Naive thymus-derived CD4-positive, alpha-beta T cell (primary cell): ENCODE measurements at regions of chr12 and their contacts with region 1.

Region 1: DNA sequence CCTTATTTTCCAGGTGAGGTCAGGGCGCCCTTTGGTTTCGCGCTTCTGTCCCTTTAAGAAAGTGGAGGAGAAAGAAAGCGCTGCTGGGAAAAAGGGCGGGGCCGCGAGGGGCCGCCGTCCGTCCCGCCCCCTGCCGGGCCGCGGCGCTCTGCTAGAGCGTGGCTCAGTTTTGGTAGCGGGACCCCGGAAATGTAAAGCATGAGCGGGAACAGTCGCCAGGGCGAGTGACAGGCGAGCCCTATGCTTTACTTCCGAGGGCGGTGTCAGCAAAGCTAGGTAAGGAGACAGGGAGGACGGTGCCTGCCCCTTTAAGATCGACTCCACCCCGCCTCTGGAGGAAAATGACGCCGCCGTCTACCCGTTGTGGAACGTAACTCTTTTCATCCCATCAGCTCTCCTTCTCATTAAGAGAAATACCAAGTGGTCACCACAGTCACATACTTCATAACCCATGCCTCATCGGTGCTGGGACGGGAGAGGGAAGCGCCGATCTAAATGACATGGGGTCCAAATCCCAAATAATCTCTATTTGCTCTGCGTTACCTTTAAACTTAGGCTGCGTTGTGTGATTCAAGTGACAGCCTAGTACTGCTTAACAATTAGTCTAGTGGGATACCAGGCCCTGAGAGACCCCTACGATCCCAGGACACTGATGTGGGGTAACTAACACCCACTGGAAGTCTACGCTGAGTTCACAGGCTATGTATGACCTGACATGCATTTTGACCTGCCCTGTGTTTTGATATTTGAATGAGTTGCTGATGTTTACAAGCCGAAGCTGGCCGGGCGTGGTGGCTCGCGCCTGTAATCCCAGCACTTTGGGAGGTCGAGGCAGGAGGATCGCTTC is at the start of gene ETFBKMT:
- DNase-seq: peak; percentile 85 to 95 (median 93)
- ATAC-seq: peak; percentile 99
- H3K4me3 ChIP-seq: peak within 1 kb of the TSS; percentile 85
- H3K4me3 Mint-ChIP-seq: peak within 1 kb of the TSS; percentile 81 to 99 (median 96)
- H3K27ac ChIP-seq: peak within 1 kb of the TSS; percentile 90
- H3K27ac Mint-ChIP-seq: peak within 1 kb of the TSS; percentile 91 to 100 (median 97)
- H3K4me1 ChIP-seq: peaks cover 0 to 10% of the 10 kb centered on the region in 2 donors
- H3K4me1 Mint-ChIP-seq: peaks cover 3 to 36% (median 24%) of the 10 kb centered on the region in 7 donors
- H3K27me3 ChIP-seq: no peaks in the 10 kb centered on the region
- H3K27me3 Mint-ChIP-seq: no peaks in the 10 kb centered on the region
- total RNA-seq, gene ETFBKMT: 0.92 to 2.0 (median 1.9) TPM

Region 2: DNA sequence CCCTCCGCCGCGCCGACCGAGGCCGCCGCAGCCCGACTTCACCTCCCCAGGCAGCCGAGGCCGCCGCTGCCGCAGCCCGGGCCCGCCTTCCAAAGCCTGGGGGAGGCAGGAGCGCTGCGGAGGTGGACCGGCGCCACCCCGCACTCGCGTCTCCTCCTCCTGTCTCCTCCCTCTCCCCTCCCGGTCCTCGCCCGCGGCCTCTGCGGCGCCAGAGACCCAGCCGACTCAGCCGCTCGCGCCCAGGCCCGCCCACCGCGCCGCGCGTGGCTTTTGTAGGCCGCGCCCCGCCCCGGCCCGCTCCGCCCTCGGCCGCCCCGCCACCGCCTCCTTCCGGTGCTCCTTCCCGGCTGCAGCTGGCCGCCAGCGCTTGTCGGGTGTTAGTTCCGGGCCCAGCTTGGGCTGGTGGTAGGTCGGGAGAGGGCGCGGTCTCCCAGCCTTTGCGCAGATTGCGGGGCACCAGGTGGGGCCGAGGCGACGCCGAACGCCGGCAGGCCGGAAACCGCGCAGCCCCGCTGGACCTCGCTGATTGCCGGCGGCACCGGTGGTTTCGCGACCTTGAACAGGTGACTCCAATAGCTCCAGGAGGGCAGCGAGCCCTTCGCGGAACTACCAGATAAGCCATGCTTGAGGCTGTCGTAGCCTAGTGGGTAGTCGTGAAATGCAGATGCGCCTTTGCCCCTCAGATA is 904.5 kb before region 1 on chr12 and contains the start of gene CAPRIN2:
- CTCF ChIA-PET with region 1: no interaction called
- POLR2A ChIA-PET with region 1: no interaction called
- intact Hi-C with region 1: loop called (anchors 1 to 2 kb)
- DNase-seq: peak; percentile 89 to 97 (median 92)
- ATAC-seq: peak; percentile 96
- H3K4me3 ChIP-seq: peak within 1 kb of the TSS; percentile 67
- H3K4me3 Mint-ChIP-seq: peak within 1 kb of the TSS; percentile 93 to 99 (median 96)
- H3K27ac ChIP-seq: peak within 1 kb of the TSS; percentile 63
- H3K27ac Mint-ChIP-seq: peak within 1 kb of the TSS; percentile 80 to 93 (median 90)
- H3K4me1 ChIP-seq: peaks cover 13 to 29% of the 10 kb centered on the region in 2 donors
- H3K4me1 Mint-ChIP-seq: peaks cover 22 to 53% (median 46%) of the 10 kb centered on the region in 7 donors
- H3K27me3 ChIP-seq: no peaks in the 10 kb centered on the region
- H3K27me3 Mint-ChIP-seq: no peaks in the 10 kb centered on the region
- total RNA-seq, gene CAPRIN2: 13.7 to 50.1 (median 28.9) TPM

Region 3: GRCh38 chr12:31896514-31897039 is 237.3 kb after region 1 on chr12:
- CTCF ChIA-PET with region 1: interaction called, 4 read pairs
- POLR2A ChIA-PET with region 1: interaction called, 6 read pairs
- intact Hi-C with region 1: loop called (anchors 1 kb)
- DNase-seq: peak; percentile 35 to 96 (median 92)
- ATAC-seq: peak; percentile 97
- H3K4me3 ChIP-seq: no peak overlapping the region
- H3K4me3 Mint-ChIP-seq: peak overlapping the region; percentile 36 to 92 (median 76)
- H3K27ac ChIP-seq: peak overlapping the region; percentile 86
- H3K27ac Mint-ChIP-seq: peak overlapping the region; percentile 92 to 99 (median 97)
- H3K4me1 ChIP-seq: peaks cover 61% of the 10 kb centered on the region in 2 donors
- H3K4me1 Mint-ChIP-seq: peaks cover 33 to 74% (median 51%) of the 10 kb centered on the region in 7 donors
- H3K27me3 ChIP-seq: no peaks in the 10 kb centered on the region
- H3K27me3 Mint-ChIP-seq: peaks cover 0 to 6% (median 0%) of the 10 kb centered on the region in 5 donors

Region 4: GRCh38 chr12:32025906-32026305 is 366.6 kb after region 1 on chr12:
- CTCF ChIA-PET with region 1: no interaction called
- POLR2A ChIA-PET with region 1: no interaction called
- intact Hi-C with region 1: loop called in 1 of 2 experiments (anchors 1 kb)
- DNase-seq: peak; percentile 7 to 87 (median 78)
- ATAC-seq: peak; percentile 94
- H3K4me3 ChIP-seq: no peak overlapping the region
- H3K4me3 Mint-ChIP-seq: peak overlapping the region; percentile 14 to 64 (median 40)
- H3K27ac ChIP-seq: peak overlapping the region; percentile 26
- H3K27ac Mint-ChIP-seq: peak overlapping the region; percentile 57 to 92 (median 79)
- H3K4me1 ChIP-seq: peaks cover 12 to 24% of the 10 kb centered on the region in 2 donors
- H3K4me1 Mint-ChIP-seq: peaks cover 9 to 51% (median 37%) of the 10 kb centered on the region in 7 donors
- H3K27me3 ChIP-seq: no peaks in the 10 kb centered on the region
- H3K27me3 Mint-ChIP-seq: no peaks in the 10 kb centered on the region

Region 5: DNA sequence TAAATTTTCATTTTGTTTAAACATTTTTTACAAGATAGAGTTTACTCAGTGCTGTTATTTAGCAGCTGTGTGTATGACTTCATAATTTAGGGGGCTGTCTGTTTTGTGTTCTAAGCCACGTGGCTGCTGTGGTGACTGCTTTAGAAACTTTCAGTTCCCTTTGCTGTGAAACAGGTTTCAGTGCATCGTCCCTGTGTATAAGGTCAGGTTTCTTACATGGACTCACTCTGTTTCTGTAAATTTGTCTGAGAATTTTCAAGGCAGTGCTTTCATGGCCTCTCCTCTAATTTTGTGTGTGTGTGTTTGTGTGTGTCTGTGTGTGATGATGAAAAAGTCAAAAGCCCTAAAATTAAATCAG is 479.7 kb after region 1 on chr12:
- CTCF ChIA-PET with region 1: no interaction called
- POLR2A ChIA-PET with region 1: no interaction called
- intact Hi-C with region 1: loop called in 1 of 2 experiments (anchors 10 kb)
- DNase-seq: peak in 7 of 9 donors; percentile 12 to 45 (median 26)
- ATAC-seq: peak; percentile 74
- H3K4me3 ChIP-seq: peak overlapping the region; percentile 45
- H3K4me3 Mint-ChIP-seq: peak overlapping the region; percentile 71 to 94 (median 88)
- H3K27ac ChIP-seq: peak overlapping the region; percentile 59
- H3K27ac Mint-ChIP-seq: peak overlapping the region; percentile 56 to 88 (median 83)
- H3K4me1 ChIP-seq: peaks cover 0 to 7% of the 10 kb centered on the region in 2 donors
- H3K4me1 Mint-ChIP-seq: peaks cover 9 to 44% (median 39%) of the 10 kb centered on the region in 7 donors
- H3K27me3 ChIP-seq: no peaks in the 10 kb centered on the region
- H3K27me3 Mint-ChIP-seq: peaks cover 0 to 8% (median 0%) of the 10 kb centered on the region in 5 donors

Region 6: GRCh38 chr12:32455607-32456071 is 796.3 kb after region 1 on chr12:
- CTCF ChIA-PET with region 1: no interaction called
- POLR2A ChIA-PET with region 1: no interaction called
- intact Hi-C with region 1: loop called in 1 of 2 experiments (anchors 10 kb)
- DNase-seq: peak in 6 of 9 donors; percentile 4 to 45 (median 32)
- ATAC-seq: peak; percentile 63
- H3K4me3 ChIP-seq: no peak overlapping the region
- H3K4me3 Mint-ChIP-seq: peak overlapping the region in 5 of 10 donors; percentile 16 to 55 (median 36)
- H3K27ac ChIP-seq: no peak overlapping the region
- H3K27ac Mint-ChIP-seq: no peak overlapping the region
- H3K4me1 ChIP-seq: no peaks in the 10 kb centered on the region
- H3K4me1 Mint-ChIP-seq: peaks cover 0 to 4% (median 0%) of the 10 kb centered on the region in 7 donors
- H3K27me3 ChIP-seq: no peaks in the 10 kb centered on the region
- H3K27me3 Mint-ChIP-seq: peaks cover 0 to 10% (median 0%) of the 10 kb centered on the region in 5 donors